PC-3 (cell line): ENCODE measurements at regions of chr2 and their contacts with region 1.

Region 1: DNA sequence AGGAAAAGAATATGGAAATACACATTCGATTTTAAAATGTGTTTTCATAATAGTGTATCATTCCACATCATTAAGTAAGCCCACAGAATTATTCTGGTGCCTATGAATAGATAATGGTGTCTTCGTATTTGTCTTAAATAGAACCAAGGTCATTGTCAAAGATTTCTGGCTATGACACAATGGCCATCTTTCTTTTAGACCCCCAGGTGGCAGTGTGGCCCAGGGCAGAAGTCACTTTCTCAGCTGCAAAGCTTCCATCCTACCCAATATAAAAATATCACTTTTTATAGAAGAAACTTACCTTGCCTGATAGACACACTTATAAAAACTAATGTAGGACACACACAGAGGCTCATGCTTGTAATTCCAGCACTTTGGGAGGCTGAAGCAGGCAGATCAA is 57.5 kb downstream of the ZRANB3 start:
- DNase-seq: peak; percentile 56
- ATAC-seq: peak; percentile 68
- H3K4me3 ChIP-seq: no peak overlapping the region
- H3K27ac ChIP-seq: no peak overlapping the region
- H3K4me1 ChIP-seq: no peaks in the 10 kb centered on the region
- H3K27me3 ChIP-seq: no peaks in the 10 kb centered on the region
- CTCF ChIP-seq: peak; percentile 82

Region 2: GRCh38 chr2:135531231-135532228 is 58.0 kb after region 1 on chr2 and contains the start of gene R3HDM1:
- CTCF ChIA-PET with region 1: no interaction called
- POLR2A ChIA-PET with region 1: no interaction called
- intact Hi-C with region 1: loop called (anchors 2 kb)
- DNase-seq: peak; percentile 99
- ATAC-seq: peak; percentile 81
- H3K4me3 ChIP-seq: peak within 1 kb of the TSS; percentile 89
- H3K27ac ChIP-seq: peak within 1 kb of the TSS; percentile 81
- H3K4me1 ChIP-seq: peaks cover 18% of the 10 kb centered on the region
- H3K27me3 ChIP-seq: no peaks in the 10 kb centered on the region
- CTCF ChIP-seq: 0 out of 2 replicates have a peak, but pooled peaks have one; percentile 25
- total RNA-seq, gene R3HDM1: 12.8 and 24.4 TPM in 2 replicates

Region 3: DNA sequence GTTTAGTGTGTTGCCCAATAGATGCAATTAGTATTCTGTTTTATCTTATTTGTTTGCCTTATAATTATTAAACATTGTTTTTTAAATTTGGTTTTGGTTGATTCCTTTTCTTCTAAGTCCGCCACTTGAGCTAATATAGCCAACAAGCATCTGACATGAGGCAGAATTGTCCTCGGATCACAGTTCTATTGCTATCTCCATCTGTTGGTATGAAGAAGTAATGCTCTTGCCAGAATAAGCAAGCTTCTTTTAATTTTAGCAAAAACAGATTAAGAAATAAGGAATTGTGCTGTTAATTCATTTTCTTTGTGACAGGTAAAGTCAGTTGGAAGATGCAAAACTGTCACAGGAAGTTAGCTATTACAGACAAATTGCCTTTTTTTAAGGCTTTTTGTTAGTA is 112.0 kb after region 1 on chr2:
- CTCF ChIA-PET with region 1: no interaction called
- POLR2A ChIA-PET with region 1: interaction called, 11 read pairs
- intact Hi-C with region 1: loop called (anchors 5 kb)
- DNase-seq: peak; percentile 22
- ATAC-seq: no peak
- H3K4me3 ChIP-seq: no peak overlapping the region
- H3K27ac ChIP-seq: no peak overlapping the region
- H3K4me1 ChIP-seq: no peaks in the 10 kb centered on the region
- H3K27me3 ChIP-seq: no peaks in the 10 kb centered on the region
- CTCF ChIP-seq: peak; percentile 45; the same call in 1 of the 2 replicates

Region 4: DNA sequence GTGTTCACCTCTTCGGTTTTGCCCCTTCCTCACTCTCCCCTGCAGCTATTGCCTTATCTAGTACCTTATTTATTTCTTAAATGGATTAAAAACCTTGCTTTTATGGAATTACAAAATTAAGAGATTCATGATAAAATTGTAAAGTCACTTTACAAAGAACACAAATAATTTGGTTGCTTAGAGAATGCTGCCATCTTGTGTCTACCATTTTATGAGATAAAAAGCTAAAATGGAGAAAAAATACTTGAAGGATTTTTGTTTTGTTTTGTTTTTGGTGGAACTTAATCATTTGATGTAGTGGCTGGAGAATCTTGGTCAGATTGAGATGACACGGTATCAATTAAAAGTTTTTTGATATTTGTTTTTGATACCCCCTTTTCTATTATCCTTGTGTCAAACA is 127.3 kb after region 1 on chr2:
- CTCF ChIA-PET with region 1: interaction called, 5 read pairs
- POLR2A ChIA-PET with region 1: no interaction called
- intact Hi-C with region 1: loop called (anchors 1 kb)
- DNase-seq: peak; percentile 28
- ATAC-seq: no peak
- H3K4me3 ChIP-seq: no peak overlapping the region
- H3K27ac ChIP-seq: no peak overlapping the region
- H3K4me1 ChIP-seq: no peaks in the 10 kb centered on the region
- H3K27me3 ChIP-seq: no peaks in the 10 kb centered on the region
- CTCF ChIP-seq: no peak; the same call in 1 of the 2 replicates